Activated CD8-positive, alpha-beta T cell treated with anti-CD3 and anti-CD28 coated beads, Interleukin-2, amount 10 ng/mL, durations not matched to agents 7 days and 5 days (primary cell): ENCODE measurements at regions of chr4 and their contacts with region 1.

Region 1: DNA sequence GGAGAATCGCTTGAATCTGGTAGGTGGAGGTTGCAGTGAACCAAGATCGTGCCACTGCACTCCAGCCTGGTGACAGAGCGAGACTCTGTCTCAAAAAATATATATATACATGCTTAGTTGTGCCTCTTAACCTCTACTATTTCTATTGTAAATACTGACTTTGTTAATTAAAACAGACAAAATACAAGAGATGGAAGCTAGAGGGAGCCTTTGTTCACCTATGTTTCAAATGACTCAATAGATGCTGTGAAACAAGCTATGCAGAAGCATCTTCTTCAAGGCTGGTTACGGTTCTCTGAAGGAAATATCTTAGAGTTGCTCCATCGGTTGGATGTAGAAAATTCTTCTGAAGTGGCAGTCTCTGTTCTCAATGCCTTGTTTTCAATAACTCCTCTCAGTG is 6.2 kb downstream of the NCAPG start:
- DNase-seq: no peak
- ATAC-seq: peak; percentile 78
- H3K4me3 Mint-ChIP-seq: no peak overlapping the region
- H3K27ac Mint-ChIP-seq: peak overlapping the region; percentile 68
- H3K4me1 Mint-ChIP-seq: peaks cover 36% of the 10 kb centered on the region
- H3K27me3 Mint-ChIP-seq: no peaks in the 10 kb centered on the region

Region 2: DNA sequence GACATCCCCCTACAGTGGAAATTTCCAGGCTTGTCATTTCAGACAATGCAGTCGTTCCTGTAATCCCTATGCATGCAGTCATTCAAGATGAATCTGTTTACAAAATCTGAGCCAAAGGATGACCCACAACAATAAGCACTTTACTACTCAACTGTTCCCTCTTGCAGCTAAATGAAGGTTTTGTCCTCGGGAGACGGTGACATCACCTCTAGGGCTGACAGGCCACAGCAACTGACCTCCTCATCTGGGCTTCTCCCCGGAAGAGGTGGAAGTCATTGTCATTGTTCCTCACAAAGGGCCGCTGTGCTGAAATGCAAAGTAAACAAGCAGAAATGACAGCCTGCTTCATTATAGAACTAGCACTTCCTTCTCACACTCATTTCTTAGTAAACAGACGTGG is 272.8 kb before region 1 on chr4:
- CTCF ChIA-PET with region 1: interaction called, 20 read pairs
- POLR2A ChIA-PET with region 1: no interaction called
- DNase-seq: no peak
- ATAC-seq: no peak
- H3K4me3 Mint-ChIP-seq: no peak overlapping the region
- H3K27ac Mint-ChIP-seq: no peak overlapping the region
- H3K4me1 Mint-ChIP-seq: peaks cover 6% of the 10 kb centered on the region
- H3K27me3 Mint-ChIP-seq: peaks cover 23% of the 10 kb centered on the region

Region 3: DNA sequence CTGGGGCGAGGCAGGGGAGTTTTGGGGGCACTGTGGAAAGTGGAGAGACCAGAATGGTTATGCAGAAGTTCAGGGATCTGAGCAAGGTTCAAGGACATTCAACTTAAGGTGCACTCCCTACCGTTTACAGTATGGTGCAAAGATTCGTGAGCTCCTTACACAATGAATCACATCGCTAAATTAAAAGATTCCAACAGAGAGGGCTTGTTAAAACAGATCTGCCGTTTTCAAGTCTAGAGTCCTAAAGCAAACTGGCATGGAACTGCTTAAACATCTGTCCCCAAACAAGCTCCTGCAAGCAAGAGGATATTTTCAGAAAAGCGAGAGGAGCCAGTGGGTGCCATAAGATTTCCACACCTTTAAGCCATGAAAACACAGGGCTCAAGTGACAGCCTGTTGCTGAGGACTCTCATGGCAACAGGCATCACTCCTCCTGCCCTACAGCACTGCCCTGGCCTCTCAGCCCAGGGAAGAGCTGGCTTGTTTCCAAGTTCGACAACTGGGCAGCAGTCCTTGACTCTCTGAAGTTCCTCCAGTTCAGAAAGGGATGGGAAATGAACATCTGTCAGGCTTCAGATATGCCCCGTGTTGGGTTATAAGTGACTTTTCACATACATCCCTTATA is 45.6 kb before region 1 on chr4:
- CTCF ChIA-PET with region 1: no interaction called
- POLR2A ChIA-PET with region 1: no interaction called
- DNase-seq: peak; percentile 2
- ATAC-seq: no peak
- H3K4me3 Mint-ChIP-seq: no peak overlapping the region
- H3K27ac Mint-ChIP-seq: no peak overlapping the region
- H3K4me1 Mint-ChIP-seq: no peaks in the 10 kb centered on the region
- H3K27me3 Mint-ChIP-seq: peaks cover 3% of the 10 kb centered on the region

Region 4: GRCh38 chr4:17846266-17846665 is 29.2 kb after region 1 on chr4:
- CTCF ChIA-PET with region 1: interaction called, 13 read pairs
- POLR2A ChIA-PET with region 1: no interaction called
- DNase-seq: no peak
- ATAC-seq: no peak
- H3K4me3 Mint-ChIP-seq: no peak overlapping the region
- H3K27ac Mint-ChIP-seq: no peak overlapping the region
- H3K4me1 Mint-ChIP-seq: no peaks in the 10 kb centered on the region
- H3K27me3 Mint-ChIP-seq: no peaks in the 10 kb centered on the region

Region 5: GRCh38 chr4:18366892-18367291 is 549.9 kb after region 1 on chr4:
- CTCF ChIA-PET with region 1: interaction called, 11 read pairs
- POLR2A ChIA-PET with region 1: no interaction called
- DNase-seq: no peak
- ATAC-seq: peak; percentile 61
- H3K4me3 Mint-ChIP-seq: no peak overlapping the region
- H3K27ac Mint-ChIP-seq: no peak overlapping the region
- H3K4me1 Mint-ChIP-seq: no peaks in the 10 kb centered on the region
- H3K27me3 Mint-ChIP-seq: no peaks in the 10 kb centered on the region

Region 6: DNA sequence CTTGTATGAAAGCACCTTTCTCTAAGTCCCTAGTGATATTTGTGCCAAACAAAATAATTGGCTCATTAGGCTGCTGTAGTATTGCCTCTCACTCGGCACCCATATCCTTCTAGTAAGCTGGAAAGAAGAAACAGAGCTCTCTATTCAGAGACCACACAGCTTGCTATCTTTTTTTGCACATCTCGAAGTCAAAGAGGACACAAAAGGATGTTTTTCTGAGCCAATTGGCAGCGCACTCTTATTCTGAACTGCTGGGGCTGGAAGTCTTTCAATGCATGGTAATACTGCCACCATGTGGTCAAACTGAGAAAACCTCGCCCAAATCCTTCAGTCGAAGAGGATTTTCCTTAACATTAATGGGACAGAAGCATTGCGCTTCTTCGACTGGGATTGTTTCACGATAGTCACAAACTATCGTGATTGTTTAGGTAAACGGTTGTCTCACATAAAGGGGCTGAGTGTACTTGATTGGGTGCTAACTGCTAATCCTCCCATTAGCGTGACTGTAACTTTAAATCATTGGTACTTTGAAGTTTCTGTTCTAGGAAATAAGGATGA is 776.5 kb after region 1 on chr4:
- CTCF ChIA-PET with region 1: interaction called, 11 read pairs
- POLR2A ChIA-PET with region 1: no interaction called
- DNase-seq: peak; percentile 59
- ATAC-seq: peak; percentile 55
- H3K4me3 Mint-ChIP-seq: no peak overlapping the region
- H3K27ac Mint-ChIP-seq: no peak overlapping the region
- H3K4me1 Mint-ChIP-seq: peaks cover 7% of the 10 kb centered on the region
- H3K27me3 Mint-ChIP-seq: no peaks in the 10 kb centered on the region